SK-N-SH (cell line): ENCODE measurements at regions of chr12 and their contacts with region 1.

Region 1: GRCh38 chr12:54439521-54440255 is 20.6 kb upstream of the ITGA5 start:
- DNase-seq: peak; percentile 65
- H3K4me3 ChIP-seq: no peak overlapping the region
- H3K27ac ChIP-seq: no peak overlapping the region
- H3K4me1 ChIP-seq: no peaks in the 10 kb centered on the region
- H3K27me3 ChIP-seq: peaks cover 15% of the 10 kb centered on the region; the same call in 1 of the 2 replicates
- CTCF ChIP-seq: peak; percentile 87
- EP300 ChIP-seq: no peak
- RAD21 ChIP-seq: peak; percentile 91

Region 2: GRCh38 chr12:54040148-54040494 is 399.6 kb before region 1 on chr12:
- CTCF ChIA-PET with region 1: no interaction called
- POLR2A ChIA-PET with region 1: no interaction called
- DNase-seq: peak; percentile 70
- H3K4me3 ChIP-seq: no peak overlapping the region
- H3K27ac ChIP-seq: no peak overlapping the region
- H3K4me1 ChIP-seq: peaks cover 0 to 37% of the 10 kb centered on the region in 2 experiments; a peak in 1 of 4 replicates
- H3K27me3 ChIP-seq: no peaks in the 10 kb centered on the region
- CTCF ChIP-seq: no peak
- EP300 ChIP-seq: no peak
- RAD21 ChIP-seq: no peak

Region 3: DNA sequence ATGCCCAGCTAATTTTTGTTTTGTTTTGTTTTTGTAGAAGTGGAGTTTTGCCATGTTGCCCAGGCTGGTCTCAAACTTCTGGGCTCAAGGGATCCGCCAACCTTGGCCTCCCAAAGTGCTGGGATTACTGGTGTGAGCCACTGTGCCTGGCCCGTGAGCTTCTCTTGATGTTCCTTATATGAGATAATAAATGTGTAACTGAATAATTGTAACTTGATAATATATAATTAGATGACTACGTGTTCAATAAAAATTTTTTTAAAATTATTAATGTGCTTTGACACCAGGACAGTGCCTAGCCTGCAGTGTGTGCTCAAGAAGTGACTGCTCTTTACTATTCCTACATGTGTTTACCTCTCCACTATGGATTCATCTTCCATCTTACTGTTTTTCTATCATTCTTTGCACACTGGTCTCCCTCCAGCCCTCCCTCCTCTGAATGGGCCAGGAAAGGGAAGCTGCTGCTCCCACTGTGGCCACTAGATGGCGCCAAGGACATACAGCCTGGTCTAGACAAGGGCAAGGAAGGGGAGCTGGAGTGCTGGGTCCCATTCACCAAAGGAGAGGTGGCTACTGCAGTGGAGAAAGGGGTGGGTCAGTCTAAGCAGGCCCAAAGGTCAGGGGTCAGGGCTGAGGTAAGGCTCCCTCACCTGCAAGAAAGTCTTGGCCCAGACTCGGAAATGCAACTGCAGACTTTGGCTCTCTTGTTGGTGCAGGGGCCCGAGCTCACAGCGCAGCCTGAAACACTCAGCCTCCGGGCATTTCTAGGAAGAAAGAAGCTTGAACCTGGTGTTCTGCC is 40.5 kb before region 1 on chr12:
- CTCF ChIA-PET with region 1: interaction called, 490 read pairs
- POLR2A ChIA-PET with region 1: interaction called, 4 read pairs
- DNase-seq: peak; percentile 89
- H3K4me3 ChIP-seq: no peak overlapping the region; a peak in 1 of 4 replicates
- H3K27ac ChIP-seq: no peak overlapping the region
- H3K4me1 ChIP-seq: no peaks in the 10 kb centered on the region
- H3K27me3 ChIP-seq: no peaks in the 10 kb centered on the region
- CTCF ChIP-seq: peak; percentile 99
- EP300 ChIP-seq: no peak
- RAD21 ChIP-seq: peak; percentile 88

Region 4: GRCh38 chr12:54413284-54414190 is 26.2 kb before region 1 on chr12:
- CTCF ChIA-PET with region 1: interaction called, 35 read pairs
- POLR2A ChIA-PET with region 1: no interaction called
- DNase-seq: no peak
- H3K4me3 ChIP-seq: no peak overlapping the region
- H3K27ac ChIP-seq: peak overlapping the region in 1 of 2 experiments; percentile 88; a peak in 2 of 4 replicates
- H3K4me1 ChIP-seq: peaks cover 0 to 40% of the 10 kb centered on the region in 2 experiments; a peak in 2 of 4 replicates
- H3K27me3 ChIP-seq: no peaks in the 10 kb centered on the region
- CTCF ChIP-seq: no peak
- EP300 ChIP-seq: no peak
- RAD21 ChIP-seq: no peak

Region 5: DNA sequence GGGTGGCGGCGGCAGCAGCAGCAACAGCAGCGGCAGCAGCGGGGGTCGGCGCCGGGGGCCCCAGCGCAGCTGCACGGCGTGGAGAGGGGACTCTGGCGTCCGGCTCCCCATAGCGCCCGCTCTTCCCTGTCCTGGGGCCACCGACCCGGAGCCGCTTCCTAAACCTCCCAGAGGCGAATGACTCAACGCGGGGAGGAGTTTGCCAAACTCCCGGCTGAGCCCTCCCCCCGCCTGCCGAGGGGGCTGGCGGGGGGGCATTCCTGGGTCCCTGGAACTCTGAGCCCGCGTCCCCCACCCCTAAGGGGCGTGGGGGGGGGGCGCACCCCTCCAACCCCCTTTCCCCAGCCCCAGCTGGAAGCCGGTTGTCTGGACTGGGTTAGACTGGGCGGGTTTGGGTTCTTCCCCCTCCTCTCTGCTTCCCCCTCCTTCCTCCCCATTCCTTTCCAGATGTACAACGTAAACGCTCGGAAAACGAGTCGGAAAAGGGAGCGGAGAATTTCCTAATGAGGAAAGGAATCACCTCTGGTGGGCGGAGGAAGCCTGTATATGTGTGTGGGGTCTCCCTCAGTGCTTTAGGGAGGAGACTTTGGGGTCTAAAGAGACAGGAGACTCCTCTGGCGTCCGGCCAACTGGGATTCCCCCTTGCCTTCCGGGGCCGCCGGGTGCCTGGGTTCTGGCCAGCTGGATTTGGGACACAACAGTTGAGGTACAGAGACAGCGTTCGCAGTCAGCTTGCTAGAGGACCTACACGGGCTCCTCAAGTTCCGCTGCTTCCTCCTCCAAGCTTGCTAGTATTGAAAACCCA is 20.4 kb before region 1 on chr12 and contains the start of gene ITGA5:
- CTCF ChIA-PET with region 1: interaction called, 35 read pairs
- POLR2A ChIA-PET with region 1: no interaction called
- DNase-seq: peak; percentile 58
- H3K4me3 ChIP-seq: peak within 1 kb of the TSS; percentile 59 to 96
- H3K27ac ChIP-seq: peak within 1 kb of the TSS in 1 of 2 experiments; percentile 60; a peak in 2 of 4 replicates
- H3K4me1 ChIP-seq: peaks cover 0 to 23% of the 10 kb centered on the region in 2 experiments; a peak in 3 of 4 replicates
- H3K27me3 ChIP-seq: no peaks in the 10 kb centered on the region
- CTCF ChIP-seq: no peak
- EP300 ChIP-seq: no peak
- RAD21 ChIP-seq: no peak
- polyA plus RNA-seq, gene ITGA5: 35.0 and 52.5 TPM in 2 replicates

Region 6: GRCh38 chr12:54425702-54426101 is 14.0 kb before region 1 on chr12:
- CTCF ChIA-PET with region 1: interaction called, 37 read pairs
- POLR2A ChIA-PET with region 1: no interaction called
- DNase-seq: no peak
- H3K4me3 ChIP-seq: no peak overlapping the region
- H3K27ac ChIP-seq: no peak overlapping the region
- H3K4me1 ChIP-seq: peaks cover 0 to 6% of the 10 kb centered on the region in 2 experiments; a peak in 2 of 4 replicates
- H3K27me3 ChIP-seq: no peaks in the 10 kb centered on the region
- CTCF ChIP-seq: no peak
- EP300 ChIP-seq: no peak
- RAD21 ChIP-seq: no peak

Region 7: GRCh38 chr12:54452628-54453027 is 12.9 kb after region 1 on chr12:
- CTCF ChIA-PET with region 1: interaction called, 25 read pairs
- POLR2A ChIA-PET with region 1: no interaction called
- DNase-seq: no peak
- H3K4me3 ChIP-seq: no peak overlapping the region
- H3K27ac ChIP-seq: no peak overlapping the region
- H3K4me1 ChIP-seq: no peaks in the 10 kb centered on the region
- H3K27me3 ChIP-seq: peaks cover 21% of the 10 kb centered on the region; the same call in 1 of the 2 replicates
- CTCF ChIP-seq: no peak
- EP300 ChIP-seq: no peak
- RAD21 ChIP-seq: no peak